ENCODE measurements at regions of chr15 and their contacts with region 1.

Region 1: GRCh38 chr15:71237456-71238188 is 122.4 kb downstream of the THSD4 start:
- DNase-seq: peak; percentile 89
- ATAC-seq: peak; percentile 92

Region 2: GRCh38 chr15:71294886-71295638 is 57.4 kb after region 1 on chr15:
- intact Hi-C with region 1: no loop called
- DNase-seq: no peak
- ATAC-seq: no peak

Region 3: DNA sequence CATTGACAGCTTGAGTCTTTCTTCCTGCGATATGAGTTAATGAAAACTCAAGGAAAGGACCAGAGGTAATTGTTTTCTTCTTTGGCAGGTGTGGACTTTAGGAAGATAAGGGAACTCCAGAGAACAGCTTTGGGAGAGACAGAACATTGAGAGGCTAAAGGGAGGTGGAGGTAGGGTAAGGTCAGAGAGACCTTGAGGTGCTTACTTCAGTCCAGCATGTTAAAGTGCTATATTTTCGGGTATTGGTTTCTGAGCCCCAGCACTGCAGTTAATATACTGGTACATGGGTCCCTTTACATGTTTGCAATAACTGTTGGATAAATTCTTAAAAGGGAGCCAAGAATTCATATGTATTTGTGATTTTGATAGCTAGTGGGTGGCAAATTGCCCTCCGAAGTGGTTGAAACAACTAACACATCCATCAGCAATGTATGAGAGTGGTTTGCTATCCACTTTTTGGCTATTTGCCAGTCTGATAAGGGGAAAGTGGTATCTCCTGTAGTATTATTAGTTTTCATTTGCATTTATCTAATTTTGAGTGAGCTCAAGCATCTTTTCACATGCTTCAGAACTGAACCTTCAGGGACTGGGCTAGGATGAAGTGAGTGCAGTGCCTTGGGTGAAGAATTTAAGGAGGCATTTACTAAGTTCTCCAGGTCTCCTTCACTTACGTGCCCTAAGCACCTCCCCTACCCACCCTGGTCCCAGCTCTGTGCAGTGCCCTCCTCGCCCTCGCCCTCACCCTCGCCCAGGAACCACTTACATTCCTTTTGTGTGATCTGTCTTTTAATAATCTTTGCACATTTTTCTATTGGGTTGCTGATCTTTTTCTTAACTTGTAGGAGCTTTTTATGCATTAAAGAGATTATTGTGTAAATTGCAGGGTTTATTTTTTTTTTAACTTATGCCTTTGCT is 200.0 kb after region 1 on chr15:
- intact Hi-C with region 1: loop called (anchors 10 kb)
- DNase-seq: no peak
- ATAC-seq: no peak

Measured in Right ventricle myocardium inferior (tissue), 1 donor.